Naive thymus-derived CD4-positive, alpha-beta T cell (primary cell): ENCODE measurements at regions of chrX and their contacts with region 1.

Region 1: GRCh38 chrX:23667239-23668177 is at the start of gene PRDX4:
- DNase-seq: peak; percentile 42 to 79 (median 57)
- ATAC-seq: peak; percentile 96
- H3K4me3 ChIP-seq: peak within 1 kb of the TSS; percentile 73
- H3K4me3 Mint-ChIP-seq: peak within 1 kb of the TSS; percentile 80 to 94 (median 92)
- H3K27ac ChIP-seq: peak within 1 kb of the TSS; percentile 85
- H3K27ac Mint-ChIP-seq: peak within 1 kb of the TSS; percentile 71 to 97 (median 89)
- H3K4me1 ChIP-seq: peaks cover 10 to 12% of the 10 kb centered on the region in 2 donors
- H3K4me1 Mint-ChIP-seq: peaks cover 6 to 29% (median 23%) of the 10 kb centered on the region in 7 donors
- H3K27me3 ChIP-seq: no peaks in the 10 kb centered on the region
- H3K27me3 Mint-ChIP-seq: no peaks in the 10 kb centered on the region
- total RNA-seq, gene PRDX4: 8.0 to 33.3 (median 12.1) TPM

Region 2: GRCh38 chrX:23732704-23733103 is 65.2 kb after region 1 on chrX:
- CTCF ChIA-PET with region 1: no interaction called
- POLR2A ChIA-PET with region 1: no interaction called
- intact Hi-C with region 1: no loop called
- DNase-seq: no peak
- ATAC-seq: peak; percentile 48
- H3K4me3 ChIP-seq: no peak overlapping the region
- H3K4me3 Mint-ChIP-seq: peak overlapping the region in 1 of 10 donors; percentile 62
- H3K27ac ChIP-seq: no peak overlapping the region
- H3K27ac Mint-ChIP-seq: peak overlapping the region in 2 of 9 donors; percentile 46 to 82
- H3K4me1 ChIP-seq: peaks cover 0 to 6% of the 10 kb centered on the region in 2 donors
- H3K4me1 Mint-ChIP-seq: peaks cover 0 to 26% (median 0%) of the 10 kb centered on the region in 7 donors
- H3K27me3 ChIP-seq: no peaks in the 10 kb centered on the region
- H3K27me3 Mint-ChIP-seq: no peaks in the 10 kb centered on the region

Region 3: DNA sequence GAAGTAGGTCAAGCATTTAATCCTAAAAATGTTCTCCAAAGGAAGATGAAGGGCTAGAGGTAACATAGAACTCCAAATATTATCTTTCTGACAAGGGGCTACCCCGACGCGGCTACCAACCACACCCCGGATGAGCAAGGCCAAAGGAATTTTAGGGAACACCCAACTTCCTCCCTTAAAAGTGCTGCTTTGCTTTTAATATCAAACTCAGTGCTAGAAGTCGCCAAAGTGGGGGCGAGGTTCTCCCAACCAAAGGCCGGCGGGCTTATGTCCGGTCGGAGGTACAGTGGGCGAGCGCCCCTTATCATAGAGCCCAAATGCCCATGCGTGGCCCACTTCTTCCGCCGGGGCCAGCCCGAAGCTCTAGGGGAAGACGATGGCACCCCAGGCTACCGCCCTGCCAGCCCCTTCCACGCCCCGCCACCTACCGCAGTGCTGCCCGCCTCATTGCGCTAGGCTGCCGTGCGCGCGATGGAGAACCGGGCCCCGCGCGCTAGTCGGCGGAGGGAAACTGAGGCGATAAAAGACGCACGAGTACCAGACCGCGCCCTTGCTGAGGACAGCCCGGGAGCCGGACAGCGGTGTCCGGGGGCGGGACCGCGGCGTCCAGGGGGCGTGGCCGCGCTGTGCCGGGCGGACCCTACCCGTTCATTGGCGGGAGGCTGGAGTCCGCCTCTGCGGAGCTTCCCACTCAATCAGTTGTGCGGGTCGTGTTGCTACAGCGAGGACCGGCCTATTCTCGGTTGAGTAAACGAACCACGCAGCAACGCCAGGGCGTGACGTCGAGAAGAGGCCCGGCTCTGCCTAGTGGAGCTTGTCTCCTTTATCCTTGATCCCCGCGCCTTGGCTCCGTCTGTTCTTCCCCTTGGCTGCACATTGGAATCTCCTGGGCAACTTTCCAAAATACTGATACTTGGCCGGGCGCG is 75.5 kb after region 1 on chrX and contains the start of gene ACOT9:
- CTCF ChIA-PET with region 1: no interaction called
- POLR2A ChIA-PET with region 1: no interaction called
- intact Hi-C with region 1: loop called in 1 of 2 experiments (anchors 5 kb)
- DNase-seq: peak; percentile 26 to 84 (median 49)
- ATAC-seq: peak; percentile 97
- H3K4me3 ChIP-seq: peak within 1 kb of the TSS; percentile 75
- H3K4me3 Mint-ChIP-seq: peak within 1 kb of the TSS; percentile 77 to 91 (median 86)
- H3K27ac ChIP-seq: peak within 1 kb of the TSS; percentile 49
- H3K27ac Mint-ChIP-seq: peak within 1 kb of the TSS; percentile 69 to 90 (median 75)
- H3K4me1 ChIP-seq: peaks cover 0 to 14% of the 10 kb centered on the region in 2 donors
- H3K4me1 Mint-ChIP-seq: peaks cover 13 to 36% (median 18%) of the 10 kb centered on the region in 7 donors
- H3K27me3 ChIP-seq: no peaks in the 10 kb centered on the region
- H3K27me3 Mint-ChIP-seq: no peaks in the 10 kb centered on the region
- total RNA-seq, gene ACOT9: 8.2 to 40.1 (median 9.1) TPM

Region 4: GRCh38 chrX:23773601-23774175 is 106.2 kb after region 1 on chrX:
- CTCF ChIA-PET with region 1: no interaction called
- POLR2A ChIA-PET with region 1: no interaction called
- intact Hi-C with region 1: loop called in 1 of 2 experiments (anchors 2 kb)
- DNase-seq: peak in 7 of 9 donors; percentile 21 to 72 (median 64)
- ATAC-seq: peak; percentile 100
- H3K4me3 ChIP-seq: no peak overlapping the region
- H3K4me3 Mint-ChIP-seq: peak overlapping the region; percentile 36 to 81 (median 71)
- H3K27ac ChIP-seq: peak overlapping the region; percentile 71
- H3K27ac Mint-ChIP-seq: peak overlapping the region; percentile 92 to 98 (median 94)
- H3K4me1 ChIP-seq: peaks cover 0 to 6% of the 10 kb centered on the region in 2 donors
- H3K4me1 Mint-ChIP-seq: peaks cover 0 to 15% (median 9%) of the 10 kb centered on the region in 7 donors
- H3K27me3 ChIP-seq: no peaks in the 10 kb centered on the region
- H3K27me3 Mint-ChIP-seq: no peaks in the 10 kb centered on the region

Region 5: GRCh38 chrX:24024819-24025740 is 357.6 kb after region 1 on chrX:
- CTCF ChIA-PET with region 1: no interaction called
- POLR2A ChIA-PET with region 1: interaction called, 3 read pairs
- intact Hi-C with region 1: loop called (anchors 2 kb)
- DNase-seq: peak; percentile 68 to 82 (median 76)
- ATAC-seq: peak; percentile 96
- H3K4me3 ChIP-seq: peak overlapping the region; percentile 74
- H3K4me3 Mint-ChIP-seq: peak overlapping the region; percentile 71 to 94 (median 86)
- H3K27ac ChIP-seq: peak overlapping the region; percentile 96
- H3K27ac Mint-ChIP-seq: peak overlapping the region in 7 of 9 donors; percentile 48 to 92 (median 85)
- H3K4me1 ChIP-seq: no peaks in the 10 kb centered on the region
- H3K4me1 Mint-ChIP-seq: peaks cover 7 to 38% (median 27%) of the 10 kb centered on the region in 7 donors
- H3K27me3 ChIP-seq: no peaks in the 10 kb centered on the region
- H3K27me3 Mint-ChIP-seq: peaks cover 0 to 3% (median 0%) of the 10 kb centered on the region in 5 donors

Region 6: DNA sequence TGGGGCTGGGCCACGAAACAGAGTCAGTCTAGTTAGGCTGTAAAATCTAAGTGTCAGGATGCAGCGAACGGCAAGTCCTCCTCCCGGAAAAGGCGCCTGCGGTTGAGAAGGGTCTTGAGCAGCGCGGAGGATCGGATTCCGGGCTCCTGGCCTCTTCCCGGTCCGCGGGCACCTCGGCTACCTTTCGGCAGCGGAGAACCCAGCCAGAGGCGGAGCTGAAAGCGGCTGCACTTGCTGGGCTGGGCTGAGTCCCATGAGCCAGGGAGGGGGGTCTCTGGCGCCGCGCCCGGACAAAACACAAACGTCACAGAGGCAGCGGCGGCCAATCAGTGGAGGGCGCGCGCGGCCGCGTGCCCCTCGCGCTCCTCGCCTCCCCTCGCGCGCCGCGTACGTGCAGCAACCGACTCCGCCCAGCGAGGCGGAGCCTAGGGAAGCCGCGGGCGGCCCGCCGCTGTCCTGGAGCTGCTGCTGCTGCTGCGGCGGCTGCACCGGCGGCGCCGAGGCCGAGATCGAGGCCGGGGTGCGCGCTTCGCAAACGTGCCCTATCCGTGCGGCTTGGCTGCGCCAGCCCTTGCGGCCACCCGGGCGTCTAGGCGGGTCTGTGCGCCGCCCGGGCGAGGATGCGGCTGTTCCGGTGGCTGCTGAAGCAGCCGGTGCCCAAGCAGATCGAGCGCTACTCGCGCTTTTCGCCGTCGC is 797.5 kb after region 1 on chrX and contains the start of gene PDK3:
- CTCF ChIA-PET with region 1: no interaction called
- POLR2A ChIA-PET with region 1: no interaction called
- intact Hi-C with region 1: loop called in 1 of 2 experiments (anchors 5 kb)
- DNase-seq: peak; percentile 81 to 92 (median 89)
- ATAC-seq: peak; percentile 98
- H3K4me3 ChIP-seq: peak within 1 kb of the TSS; percentile 70
- H3K4me3 Mint-ChIP-seq: peak within 1 kb of the TSS; percentile 48 to 90 (median 85)
- H3K27ac ChIP-seq: peak within 1 kb of the TSS; percentile 92
- H3K27ac Mint-ChIP-seq: peak within 1 kb of the TSS; percentile 77 to 97 (median 93)
- H3K4me1 ChIP-seq: peaks cover 14 to 24% of the 10 kb centered on the region in 2 donors
- H3K4me1 Mint-ChIP-seq: peaks cover 7 to 37% (median 33%) of the 10 kb centered on the region in 7 donors
- H3K27me3 ChIP-seq: no peaks in the 10 kb centered on the region
- H3K27me3 Mint-ChIP-seq: no peaks in the 10 kb centered on the region
- total RNA-seq, gene PDK3: 17.4 to 29.4 (median 28.5) TPM

Region 7: DNA sequence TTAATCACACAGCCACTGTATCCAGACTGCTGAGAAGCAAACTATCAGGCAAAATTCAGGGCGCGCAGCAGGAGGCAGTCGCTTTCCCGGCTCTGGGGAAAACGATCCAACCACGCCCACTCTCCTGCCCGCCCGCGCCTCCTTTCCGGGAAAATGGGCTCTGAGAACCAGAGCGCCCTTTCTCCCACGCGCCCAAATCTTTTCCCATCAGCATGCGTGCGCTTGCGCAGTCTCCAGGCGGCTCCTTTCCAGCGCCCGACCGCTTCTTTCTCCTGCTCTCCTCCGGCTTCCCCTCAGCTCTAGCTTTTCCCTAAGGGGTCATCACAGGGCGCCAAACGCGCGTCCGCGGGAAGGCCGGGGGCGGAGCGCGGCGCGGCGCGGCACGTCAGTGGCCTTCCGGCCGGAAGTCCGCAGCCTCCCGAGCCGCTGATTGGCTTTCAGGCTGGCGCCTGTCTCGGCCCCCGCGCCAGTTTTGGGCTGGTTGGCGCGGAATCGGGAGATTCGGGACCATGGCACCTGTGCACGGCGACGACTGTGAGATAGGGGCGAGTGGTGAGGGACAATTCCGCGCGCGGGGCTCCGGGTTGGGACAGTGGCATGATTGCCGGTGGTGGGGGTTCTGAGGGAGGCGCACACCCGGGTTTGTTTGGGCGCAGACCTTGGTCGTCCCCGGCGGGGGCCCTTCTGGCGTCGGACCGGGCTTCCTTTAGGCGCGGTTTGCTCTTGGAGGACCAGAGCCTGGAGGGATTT is 1026.1 kb after region 1 on chrX and contains the start of gene POLA1:
- CTCF ChIA-PET with region 1: no interaction called
- POLR2A ChIA-PET with region 1: no interaction called
- intact Hi-C with region 1: loop called in 1 of 2 experiments (anchors 5 kb)
- DNase-seq: peak; percentile 33 to 81 (median 41)
- ATAC-seq: peak; percentile 97
- H3K4me3 ChIP-seq: peak within 1 kb of the TSS; percentile 78
- H3K4me3 Mint-ChIP-seq: peak within 1 kb of the TSS; percentile 85 to 94 (median 89)
- H3K27ac ChIP-seq: peak within 1 kb of the TSS; percentile 52
- H3K27ac Mint-ChIP-seq: peak within 1 kb of the TSS; percentile 28 to 95 (median 77)
- H3K4me1 ChIP-seq: no peaks in the 10 kb centered on the region
- H3K4me1 Mint-ChIP-seq: peaks cover 0 to 24% (median 13%) of the 10 kb centered on the region in 7 donors
- H3K27me3 ChIP-seq: no peaks in the 10 kb centered on the region
- H3K27me3 Mint-ChIP-seq: no peaks in the 10 kb centered on the region
- total RNA-seq, gene POLA1: 6.4 to 26.6 (median 7.5) TPM